Activated T-helper 1 cell treated with anti-CD3 and anti-CD28 coated beads, Interleukin-12 subunit alpha, Interleukin-12 subunit beta, Interleukin-2, Interleukin-4 antibody, amounts not matched to agents 30 ng/mL and 10 ng/mL and 1 ng/mL, durations not matched to agents 14 hours and 24 hours and 36 hours (primary cell): ENCODE measurements at regions of chr19 and their contacts with region 1.

Region 1: DNA sequence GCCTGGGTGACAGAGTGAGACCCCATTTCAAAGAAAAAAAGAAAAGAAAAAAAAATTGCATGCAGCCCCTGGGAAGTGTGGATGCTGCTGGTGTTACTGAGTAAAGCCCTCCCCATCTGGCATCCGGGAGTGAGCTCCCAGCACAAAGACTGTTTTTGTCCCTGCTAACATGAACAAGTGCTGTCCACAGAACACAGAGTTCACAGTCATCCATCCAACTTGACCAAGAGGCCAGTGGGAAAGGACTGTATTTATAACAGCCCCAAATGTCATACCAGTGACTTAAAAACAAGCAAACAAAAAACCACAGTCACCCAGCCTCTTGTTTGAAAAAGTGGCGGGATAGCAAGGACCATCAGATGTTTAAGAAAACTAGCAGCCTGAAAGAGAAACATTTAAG is 10.8 kb downstream of the FBXO17 start:
- DNase-seq: no peak
- H3K4me3 Mint-ChIP-seq: no peak overlapping the region
- H3K27ac Mint-ChIP-seq: no peak overlapping the region
- H3K4me1 Mint-ChIP-seq: peaks cover 5% of the 10 kb centered on the region
- H3K27me3 Mint-ChIP-seq: peaks cover 12% of the 10 kb centered on the region

Region 2: DNA sequence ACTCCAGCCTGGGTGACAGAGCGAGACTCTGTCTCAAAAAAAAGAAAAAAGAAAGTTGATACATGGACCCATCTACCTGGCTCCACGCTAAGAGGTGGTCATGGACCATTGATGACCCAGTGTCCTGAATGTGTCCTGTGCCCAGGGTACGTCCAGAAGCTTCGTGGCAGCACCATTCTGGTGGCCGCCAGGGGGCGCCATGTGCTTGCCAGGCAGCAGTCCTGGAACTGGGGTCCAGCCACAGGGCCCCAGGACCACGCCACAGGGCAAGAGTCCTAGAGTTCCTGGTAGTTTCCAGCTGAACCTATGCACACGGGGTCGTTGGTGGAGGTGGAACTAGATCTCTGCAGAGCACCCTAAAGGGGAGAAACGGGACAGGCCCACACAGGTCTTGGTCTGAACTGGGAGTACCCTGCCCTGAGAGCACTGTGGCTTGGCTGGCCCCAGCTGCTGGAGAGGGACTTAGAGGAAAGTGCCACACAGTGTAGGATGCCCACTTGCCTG is 87.6 kb after region 1 on chr19:
- intact Hi-C with region 1: loop called (anchors 1 kb)
- DNase-seq: peak; percentile 34
- H3K4me3 Mint-ChIP-seq: no peak overlapping the region
- H3K27ac Mint-ChIP-seq: no peak overlapping the region
- H3K4me1 Mint-ChIP-seq: no peaks in the 10 kb centered on the region
- H3K27me3 Mint-ChIP-seq: peaks cover 5% of the 10 kb centered on the region

Region 3: GRCh38 chr19:39098365-39099269 is 133.9 kb after region 1 on chr19:
- intact Hi-C with region 1: loop called (anchors 10 kb)
- DNase-seq: no peak
- H3K4me3 Mint-ChIP-seq: no peak overlapping the region
- H3K27ac Mint-ChIP-seq: no peak overlapping the region
- H3K4me1 Mint-ChIP-seq: peaks cover 5% of the 10 kb centered on the region
- H3K27me3 Mint-ChIP-seq: peaks cover 8% of the 10 kb centered on the region

Region 4: GRCh38 chr19:39187559-39187957 is 222.8 kb after region 1 on chr19:
- intact Hi-C with region 1: loop called (anchors 1 kb)
- DNase-seq: no peak
- H3K4me3 Mint-ChIP-seq: no peak overlapping the region
- H3K27ac Mint-ChIP-seq: no peak overlapping the region
- H3K4me1 Mint-ChIP-seq: no peaks in the 10 kb centered on the region
- H3K27me3 Mint-ChIP-seq: peaks cover 2% of the 10 kb centered on the region